Activated B cell treated with CpG ODN at 0.5 μM for 24 hours (primary cell): ENCODE measurements at regions of chr10 and their contacts with region 1.

Region 1: DNA sequence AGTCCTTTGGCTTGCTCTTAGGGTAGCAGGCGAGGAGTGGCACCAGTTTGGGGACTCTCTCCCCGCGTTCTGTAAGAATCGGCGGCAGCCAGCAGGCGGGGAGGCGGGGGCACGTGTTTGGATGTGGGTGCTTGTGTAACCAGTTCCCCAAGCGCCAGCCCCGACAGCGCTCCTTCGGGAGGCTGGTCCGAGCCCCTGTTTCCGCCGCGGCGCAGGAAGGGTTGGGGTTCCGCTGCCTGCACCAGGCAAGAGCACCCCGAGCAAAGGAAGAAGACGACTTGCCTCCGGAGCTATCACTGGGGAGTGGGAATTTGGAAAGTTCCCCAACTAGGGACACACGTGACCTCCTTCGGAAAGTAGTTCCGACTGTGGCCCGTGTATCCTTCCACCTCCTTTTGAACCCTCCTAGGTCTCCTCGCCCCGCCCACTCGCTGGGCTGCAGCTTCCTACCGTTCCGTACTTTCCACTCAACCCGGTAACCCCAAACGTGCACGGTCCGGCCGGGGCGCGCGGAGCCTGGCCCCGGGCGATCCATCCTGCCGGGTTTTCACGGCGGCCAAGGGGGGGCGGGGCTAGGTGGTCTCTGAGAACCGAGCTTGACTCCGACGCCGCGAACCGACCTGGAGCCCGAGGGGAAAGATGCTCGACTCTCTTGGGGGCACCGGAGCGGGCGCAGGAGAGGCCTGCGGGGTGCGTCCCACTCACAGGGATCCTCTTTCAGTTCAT is 1.2 kb downstream of the KLLN start:
- DNase-seq: peak; percentile 93
- ATAC-seq: peak; percentile 68
- H3K4me3 Mint-ChIP-seq: peak overlapping the region; percentile 97
- H3K27ac Mint-ChIP-seq: peak overlapping the region; percentile 98
- H3K4me1 Mint-ChIP-seq: peaks cover 30% of the 10 kb centered on the region
- H3K27me3 Mint-ChIP-seq: no peaks in the 10 kb centered on the region
- CTCF ChIP-seq: no peak

Region 2: GRCh38 chr10:87794285-87794684 is 67.8 kb before region 1 on chr10:
- CTCF ChIA-PET with region 1: no interaction called
- POLR2A ChIA-PET with region 1: no interaction called
- intact Hi-C with region 1: no loop called
- DNase-seq: no peak
- ATAC-seq: no peak
- H3K4me3 Mint-ChIP-seq: no peak overlapping the region
- H3K27ac Mint-ChIP-seq: peak overlapping the region; percentile 50
- H3K4me1 Mint-ChIP-seq: peaks cover 41% of the 10 kb centered on the region
- H3K27me3 Mint-ChIP-seq: no peaks in the 10 kb centered on the region
- CTCF ChIP-seq: no peak

Region 3: DNA sequence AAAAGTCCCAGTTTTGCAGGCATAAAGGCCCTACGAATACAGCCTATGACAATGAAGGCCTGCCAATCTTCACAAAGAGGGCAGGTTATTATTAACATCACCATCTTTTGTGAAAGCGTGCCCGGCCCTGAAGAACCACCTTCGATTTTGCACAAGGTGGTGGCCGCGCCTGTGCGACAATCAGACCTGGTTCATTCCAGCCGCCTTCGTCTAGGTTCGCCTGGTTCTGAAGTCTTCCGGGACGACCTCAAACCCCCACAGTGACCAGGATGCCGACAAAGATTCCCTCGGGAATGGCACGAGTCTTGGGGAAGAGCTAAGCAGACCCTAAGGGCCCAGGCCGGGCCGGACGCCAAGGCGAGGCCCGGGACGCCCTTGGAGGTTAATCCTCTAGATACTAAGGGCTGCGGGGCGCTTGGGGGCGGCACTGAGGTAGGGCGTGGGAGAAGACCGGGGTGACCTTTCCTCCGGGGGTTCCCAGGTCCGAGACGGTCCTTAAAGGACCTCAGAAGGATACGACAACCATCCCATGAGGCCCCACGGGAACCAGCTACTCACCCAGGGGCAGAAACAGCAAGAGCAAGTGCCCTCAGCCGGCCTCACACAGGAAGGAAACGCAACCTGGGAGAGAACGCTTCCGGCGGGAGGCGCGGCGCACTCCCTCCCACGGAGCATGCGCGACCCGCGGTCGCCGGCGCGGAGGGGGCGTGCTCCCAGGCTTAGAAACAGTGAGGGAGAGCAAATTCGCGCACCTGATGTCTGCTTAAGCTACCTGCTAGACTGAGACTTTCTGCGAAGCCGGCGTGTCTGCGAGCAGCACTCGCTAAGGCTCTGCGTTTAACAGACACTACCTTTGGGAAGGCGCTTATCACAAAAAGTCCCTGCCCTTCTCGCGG is 44.3 kb before region 1 on chr10 and contains the start of gene ATAD1:
- CTCF ChIA-PET with region 1: interaction called, 6 read pairs
- POLR2A ChIA-PET with region 1: interaction called, 34 read pairs
- intact Hi-C with region 1: loop called (anchors 1 kb)
- DNase-seq: peak; percentile 85
- ATAC-seq: peak; percentile 84
- H3K4me3 Mint-ChIP-seq: peak within 1 kb of the TSS; percentile 98
- H3K27ac Mint-ChIP-seq: peak within 1 kb of the TSS; percentile 96
- H3K4me1 Mint-ChIP-seq: peaks cover 40% of the 10 kb centered on the region
- H3K27me3 Mint-ChIP-seq: no peaks in the 10 kb centered on the region
- CTCF ChIP-seq: no peak
- total RNA-seq, gene ATAD1: 34.7 and 42.6 TPM in 2 replicates

Region 4: GRCh38 chr10:87966459-87966858 is 104.3 kb after region 1 on chr10:
- CTCF ChIA-PET with region 1: no interaction called
- POLR2A ChIA-PET with region 1: interaction called, 12 read pairs
- intact Hi-C with region 1: no loop called
- DNase-seq: no peak
- ATAC-seq: no peak
- H3K4me3 Mint-ChIP-seq: no peak overlapping the region
- H3K27ac Mint-ChIP-seq: no peak overlapping the region
- H3K4me1 Mint-ChIP-seq: peaks cover 9% of the 10 kb centered on the region
- H3K27me3 Mint-ChIP-seq: no peaks in the 10 kb centered on the region
- CTCF ChIP-seq: no peak

Region 5: GRCh38 chr10:88004451-88004850 is 142.3 kb after region 1 on chr10:
- CTCF ChIA-PET with region 1: no interaction called
- POLR2A ChIA-PET with region 1: no interaction called
- intact Hi-C with region 1: no loop called
- DNase-seq: no peak
- ATAC-seq: no peak
- H3K4me3 Mint-ChIP-seq: no peak overlapping the region
- H3K27ac Mint-ChIP-seq: no peak overlapping the region
- H3K4me1 Mint-ChIP-seq: no peaks in the 10 kb centered on the region
- H3K27me3 Mint-ChIP-seq: no peaks in the 10 kb centered on the region
- CTCF ChIP-seq: no peak

Region 6: DNA sequence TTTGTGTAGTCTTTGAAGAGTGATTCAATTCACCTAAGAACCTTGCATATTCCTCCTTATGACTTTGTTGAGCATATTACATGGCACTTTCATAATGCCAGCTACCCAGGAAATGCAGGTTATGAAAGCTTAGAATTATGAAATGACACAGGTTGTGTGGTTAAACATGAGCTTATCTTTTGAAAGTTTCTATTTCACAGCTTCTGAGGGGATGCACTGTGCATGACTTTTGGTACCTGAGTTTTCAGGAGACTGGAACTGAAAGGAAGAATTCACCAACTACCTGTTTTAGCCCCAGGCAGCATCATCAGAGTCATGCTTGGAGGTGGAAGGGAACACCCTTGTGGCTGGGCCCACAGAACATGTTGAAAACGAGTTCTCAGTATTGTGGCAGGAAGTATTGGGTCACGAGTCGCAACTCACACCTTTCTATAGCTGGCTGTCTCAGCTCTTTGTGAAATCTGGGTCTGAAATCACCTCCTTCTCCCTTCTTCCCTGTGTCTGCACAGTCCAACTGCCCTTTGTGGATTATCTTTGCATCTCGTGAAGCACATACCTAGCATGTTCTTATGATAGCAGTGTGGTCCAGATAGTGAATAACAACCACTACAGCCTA is 229.5 kb after region 1 on chr10:
- CTCF ChIA-PET with region 1: interaction called, 6 read pairs
- POLR2A ChIA-PET with region 1: interaction called, 40 read pairs
- intact Hi-C with region 1: loop called (anchors 1 kb)
- DNase-seq: no peak
- ATAC-seq: peak; percentile 87
- H3K4me3 Mint-ChIP-seq: peak overlapping the region; percentile 11
- H3K27ac Mint-ChIP-seq: peak overlapping the region; percentile 81
- H3K4me1 Mint-ChIP-seq: peaks cover 37% of the 10 kb centered on the region
- H3K27me3 Mint-ChIP-seq: no peaks in the 10 kb centered on the region
- CTCF ChIP-seq: no peak

Region 7: DNA sequence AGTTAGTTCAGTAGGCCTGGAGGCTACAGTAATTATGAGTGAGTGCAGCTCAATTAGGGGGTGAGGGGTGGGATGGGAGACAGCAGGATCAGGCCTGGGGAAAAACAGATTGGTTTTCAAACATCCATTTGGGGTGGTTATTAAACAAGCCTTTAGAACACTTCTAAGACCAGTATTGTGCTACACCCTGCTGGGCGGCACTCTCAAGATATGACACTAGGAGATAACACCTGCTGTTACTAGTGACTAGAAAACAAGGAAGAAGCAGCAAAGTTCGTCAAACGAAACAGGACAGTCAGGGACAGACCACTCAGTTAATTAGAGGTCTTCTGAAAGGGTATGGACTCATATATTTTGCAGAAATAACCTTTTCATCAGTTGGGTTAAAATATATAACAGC is 354.9 kb after region 1 on chr10:
- CTCF ChIA-PET with region 1: interaction called, 4 read pairs
- POLR2A ChIA-PET with region 1: interaction called, 6 read pairs
- intact Hi-C with region 1: loop called (anchors 2 kb)
- DNase-seq: no peak
- ATAC-seq: peak; percentile 56
- H3K4me3 Mint-ChIP-seq: no peak overlapping the region
- H3K27ac Mint-ChIP-seq: no peak overlapping the region
- H3K4me1 Mint-ChIP-seq: peaks cover 17% of the 10 kb centered on the region
- H3K27me3 Mint-ChIP-seq: no peaks in the 10 kb centered on the region
- CTCF ChIP-seq: no peak

Region 8: DNA sequence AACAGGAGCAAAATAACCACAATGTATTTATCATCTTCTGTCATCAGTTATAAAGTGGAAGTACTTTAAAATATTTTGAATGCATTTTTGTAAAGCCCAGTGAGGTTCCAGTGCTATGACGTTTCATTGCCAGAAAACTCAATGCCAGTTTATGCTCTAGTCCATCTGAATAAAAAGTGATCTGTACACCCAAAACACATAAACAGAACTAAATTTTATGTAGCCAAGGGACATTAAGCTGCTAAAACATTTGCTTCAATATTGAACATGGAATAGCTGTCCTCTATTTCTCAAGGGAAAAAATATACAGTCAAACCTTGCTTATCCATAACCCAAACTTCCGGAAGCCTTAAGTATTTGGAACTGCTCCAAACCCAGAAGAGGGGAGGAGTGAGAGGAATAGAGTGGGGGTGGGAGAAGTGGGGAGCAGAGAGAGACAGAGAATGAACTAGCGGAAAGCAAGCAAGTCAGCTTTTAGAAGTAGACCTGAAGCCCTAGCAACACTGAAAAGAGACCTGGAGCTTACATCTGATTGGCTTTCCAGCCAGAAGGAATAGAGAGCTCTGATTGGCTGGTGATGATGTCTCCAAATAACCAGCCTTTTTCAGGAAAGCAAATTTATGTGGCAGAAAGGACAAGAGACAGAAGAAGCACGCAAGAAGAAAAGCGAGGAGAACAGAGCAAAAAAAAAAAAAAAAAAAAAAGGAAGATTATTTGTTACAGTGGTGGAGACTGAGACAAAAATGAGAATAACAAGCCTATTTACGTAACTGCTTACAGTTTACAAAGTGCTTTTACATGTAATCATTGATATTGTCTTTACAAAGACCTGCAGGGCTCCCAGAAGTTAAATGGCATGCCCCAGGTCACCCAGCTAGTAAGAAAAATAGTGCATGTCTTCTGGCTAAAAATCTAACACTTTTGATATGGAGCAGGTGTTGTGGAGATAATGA is 525.0 kb after region 1 on chr10:
- CTCF ChIA-PET with region 1: interaction called, 112 read pairs
- POLR2A ChIA-PET with region 1: interaction called, 220 read pairs
- intact Hi-C with region 1: loop called (anchors 1 kb)
- DNase-seq: no peak
- ATAC-seq: peak; percentile 50
- H3K4me3 Mint-ChIP-seq: no peak overlapping the region
- H3K27ac Mint-ChIP-seq: no peak overlapping the region
- H3K4me1 Mint-ChIP-seq: peaks cover 32% of the 10 kb centered on the region
- H3K27me3 Mint-ChIP-seq: no peaks in the 10 kb centered on the region
- CTCF ChIP-seq: no peak

Region 9: DNA sequence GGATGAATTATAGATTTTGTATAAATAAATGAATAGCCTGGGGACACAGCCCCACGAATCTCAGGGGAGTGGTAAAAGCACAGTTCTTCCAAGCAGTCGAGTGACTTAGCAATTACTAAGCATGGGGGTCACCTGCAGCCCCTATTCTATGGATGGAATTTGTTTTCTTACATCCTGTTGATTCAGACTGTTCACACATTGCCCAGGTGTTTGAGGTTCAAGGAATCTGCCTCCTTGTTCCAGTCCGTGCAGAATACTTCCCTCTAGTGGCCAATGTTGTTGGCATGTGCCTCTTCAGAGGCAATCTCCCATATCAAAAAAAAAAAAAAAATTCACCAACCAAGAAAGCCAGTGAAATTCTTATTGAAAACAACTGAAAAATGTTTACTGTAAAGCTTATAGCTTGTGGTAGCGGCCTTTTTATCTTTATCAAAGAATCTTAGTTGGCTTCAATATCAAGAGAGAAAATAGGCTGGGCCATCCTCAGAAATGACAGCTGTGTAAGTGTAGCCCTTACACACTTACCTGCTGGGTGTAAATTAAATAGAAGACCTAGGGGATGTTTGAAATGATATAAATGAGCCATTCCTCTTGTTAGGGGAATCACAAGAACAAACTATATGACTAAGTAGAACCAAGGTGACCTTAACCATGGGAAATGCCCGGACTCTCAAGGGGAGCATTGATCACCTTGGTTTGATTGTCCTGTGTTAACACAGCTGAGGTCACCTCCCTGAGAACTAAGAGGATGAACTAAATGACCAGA is 948.3 kb after region 1 on chr10:
- CTCF ChIA-PET with region 1: interaction called, 3 read pairs
- POLR2A ChIA-PET with region 1: no interaction called
- intact Hi-C with region 1: loop called (anchors 5 kb)
- DNase-seq: no peak
- ATAC-seq: peak; percentile 50
- H3K4me3 Mint-ChIP-seq: no peak overlapping the region
- H3K27ac Mint-ChIP-seq: no peak overlapping the region
- H3K4me1 Mint-ChIP-seq: peaks cover 5% of the 10 kb centered on the region
- H3K27me3 Mint-ChIP-seq: no peaks in the 10 kb centered on the region
- CTCF ChIP-seq: no peak